ENCODE measurements at regions of chr9 and their contacts with region 1.

Region 1: DNA sequence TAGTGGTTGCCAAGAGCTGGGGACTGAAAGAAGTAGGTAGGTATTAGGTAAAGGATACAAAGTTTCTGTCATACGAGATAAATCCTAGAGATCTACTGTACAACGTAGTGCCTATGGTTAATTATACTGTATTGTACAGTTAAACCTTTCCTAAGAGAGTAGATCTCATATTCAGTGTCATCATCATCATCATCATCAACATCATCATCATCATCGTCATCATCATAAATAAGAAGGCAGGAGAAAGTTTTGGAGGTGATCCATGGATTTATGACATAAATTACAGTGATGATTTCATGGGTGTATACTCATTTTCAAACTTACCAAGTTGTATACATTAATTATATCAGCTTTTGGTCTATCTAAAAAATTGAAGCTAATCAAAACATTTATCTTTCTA is 237.7 kb downstream of the IZUMO3 start:
- DNase-seq: no peak
- ATAC-seq: no peak
- H3K4me3 ChIP-seq: no peak overlapping the region
- H3K27ac ChIP-seq: no peak overlapping the region
- H3K4me1 ChIP-seq: no peaks in the 10 kb centered on the region
- H3K27me3 ChIP-seq: no peaks in the 10 kb centered on the region
- CTCF ChIP-seq: no peak
- POLR2A ChIP-seq: no peak

Region 2: GRCh38 chr9:24210641-24211040 is 97.4 kb before region 1 on chr9:
- intact Hi-C with region 1: no loop called
- DNase-seq: no peak
- ATAC-seq: no peak
- H3K4me3 ChIP-seq: no peak overlapping the region
- H3K27ac ChIP-seq: no peak overlapping the region
- H3K4me1 ChIP-seq: no peaks in the 10 kb centered on the region
- H3K27me3 ChIP-seq: no peaks in the 10 kb centered on the region
- CTCF ChIP-seq: no peak
- POLR2A ChIP-seq: no peak

Region 3: DNA sequence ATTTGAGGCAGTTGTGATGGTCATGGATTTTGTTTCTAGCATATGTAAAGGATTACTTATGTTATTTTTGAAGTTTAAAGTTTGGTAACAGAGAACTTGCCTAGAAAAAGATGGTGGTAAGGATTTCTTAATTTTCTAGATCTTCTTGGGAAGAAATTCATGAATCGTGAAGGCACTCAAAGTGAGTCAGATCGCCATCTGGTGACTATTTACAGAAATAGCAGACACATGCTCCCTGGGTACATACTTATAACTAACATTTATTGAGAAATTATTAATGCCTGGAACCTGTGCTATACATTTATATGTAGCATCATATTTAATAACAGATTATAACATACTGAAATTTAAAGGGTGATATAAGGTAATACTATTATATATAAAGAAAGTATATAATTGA is 62.0 kb before region 1 on chr9:
- intact Hi-C with region 1: loop called in 1 of 10 experiments (anchors 10 kb)
- DNase-seq: no peak
- ATAC-seq: no peak
- H3K4me3 ChIP-seq: no peak overlapping the region
- H3K27ac ChIP-seq: no peak overlapping the region
- H3K4me1 ChIP-seq: no peaks in the 10 kb centered on the region
- H3K27me3 ChIP-seq: no peaks in the 10 kb centered on the region
- CTCF ChIP-seq: peak in 4 of 12 donors; percentile 13 to 28 (median 22)
- POLR2A ChIP-seq: no peak